Natural killer cell (primary cell): ENCODE measurements at regions of chr4 and their contacts with region 1.

Region 1: DNA sequence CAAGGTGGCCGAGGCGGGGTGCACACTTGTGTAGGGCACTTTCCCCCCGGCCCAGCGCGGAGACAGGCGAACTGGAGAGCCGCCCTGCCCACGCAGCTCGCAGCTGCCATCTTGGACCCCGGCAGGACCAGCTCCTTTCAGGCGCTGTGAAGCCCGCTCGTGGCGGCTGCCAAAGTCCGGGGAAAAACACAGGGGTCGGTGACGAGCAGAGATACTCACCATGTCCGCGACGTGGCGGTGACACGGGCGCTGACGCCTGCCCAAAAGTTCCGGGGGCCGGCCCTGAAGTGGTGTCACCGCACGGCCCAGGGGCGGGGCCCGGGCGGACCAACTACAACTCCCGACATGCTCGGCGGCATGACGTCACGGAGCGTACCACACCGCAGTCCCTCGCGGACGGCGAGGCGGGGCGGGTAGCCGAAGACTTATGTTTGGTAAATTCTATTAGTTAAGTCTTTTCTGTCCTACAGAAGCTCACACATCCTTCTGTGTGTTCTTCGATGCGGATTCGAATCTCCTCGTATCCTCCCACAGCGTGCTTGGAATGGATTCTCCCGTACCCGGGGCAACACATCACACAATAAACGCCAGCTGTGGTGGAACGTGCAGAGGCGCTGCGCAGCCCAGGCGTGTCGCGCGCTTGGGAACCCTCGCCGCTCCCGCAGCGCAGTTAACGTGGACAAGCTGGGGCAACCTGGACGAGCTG is at the start of gene UFSP2:
- DNase-seq: peak; percentile 95 to 96
- ATAC-seq: peak; percentile 86 to 95 (median 86)
- H3K4me3 ChIP-seq: peak within 1 kb of the TSS; percentile 90
- H3K4me3 Mint-ChIP-seq: peak within 1 kb of the TSS; percentile 87
- H3K27ac ChIP-seq: peak within 1 kb of the TSS; percentile 93
- H3K27ac Mint-ChIP-seq: peak within 1 kb of the TSS; percentile 84 to 89
- H3K4me1 ChIP-seq: peaks cover 13% of the 10 kb centered on the region
- H3K4me1 Mint-ChIP-seq: peaks cover 9 to 32% of the 10 kb centered on the region in 2 donors
- H3K27me3 ChIP-seq: no peaks in the 10 kb centered on the region
- H3K27me3 Mint-ChIP-seq: peaks cover 2 to 11% of the 10 kb centered on the region in 2 donors
- CTCF ChIP-seq: no peak
- total RNA-seq, gene UFSP2: 14.0 to 18.8 (median 16.7) TPM

Region 2: GRCh38 chr4:185112104-185112503 is 313.7 kb before region 1 on chr4:
- intact Hi-C with region 1: no loop called
- DNase-seq: no peak
- ATAC-seq: no peak
- H3K4me3 ChIP-seq: no peak overlapping the region
- H3K4me3 Mint-ChIP-seq: no peak overlapping the region
- H3K27ac ChIP-seq: no peak overlapping the region
- H3K27ac Mint-ChIP-seq: no peak overlapping the region
- H3K4me1 ChIP-seq: no peaks in the 10 kb centered on the region
- H3K4me1 Mint-ChIP-seq: no peaks in the 10 kb centered on the region
- H3K27me3 ChIP-seq: peaks cover 3% of the 10 kb centered on the region
- H3K27me3 Mint-ChIP-seq: peaks cover 20% of the 10 kb centered on the region in 2 donors
- CTCF ChIP-seq: no peak

Region 3: GRCh38 chr4:185395956-185396723 is 29.7 kb before region 1 on chr4:
- intact Hi-C with region 1: loop called (anchors 1 kb)
- DNase-seq: peak; percentile 97 to 98
- ATAC-seq: peak; percentile 89 to 98 (median 92)
- H3K4me3 ChIP-seq: peak overlapping the region; percentile 96
- H3K4me3 Mint-ChIP-seq: peak overlapping the region; percentile 96
- H3K27ac ChIP-seq: peak overlapping the region; percentile 99
- H3K27ac Mint-ChIP-seq: peak overlapping the region; percentile 94 to 97
- H3K4me1 ChIP-seq: peaks cover 7% of the 10 kb centered on the region
- H3K4me1 Mint-ChIP-seq: peaks cover 25 to 26% of the 10 kb centered on the region in 2 donors
- H3K27me3 ChIP-seq: no peaks in the 10 kb centered on the region
- H3K27me3 Mint-ChIP-seq: no peaks in the 10 kb centered on the region
- CTCF ChIP-seq: no peak

Region 4: GRCh38 chr4:185559913-185560281 is 134.1 kb after region 1 on chr4:
- intact Hi-C with region 1: no loop called
- DNase-seq: no peak
- ATAC-seq: no peak
- H3K4me3 ChIP-seq: no peak overlapping the region
- H3K4me3 Mint-ChIP-seq: no peak overlapping the region
- H3K27ac ChIP-seq: no peak overlapping the region
- H3K27ac Mint-ChIP-seq: no peak overlapping the region
- H3K4me1 ChIP-seq: no peaks in the 10 kb centered on the region
- H3K4me1 Mint-ChIP-seq: no peaks in the 10 kb centered on the region
- H3K27me3 ChIP-seq: no peaks in the 10 kb centered on the region
- H3K27me3 Mint-ChIP-seq: peaks cover 2 to 12% of the 10 kb centered on the region in 2 donors
- CTCF ChIP-seq: no peak

Region 5: DNA sequence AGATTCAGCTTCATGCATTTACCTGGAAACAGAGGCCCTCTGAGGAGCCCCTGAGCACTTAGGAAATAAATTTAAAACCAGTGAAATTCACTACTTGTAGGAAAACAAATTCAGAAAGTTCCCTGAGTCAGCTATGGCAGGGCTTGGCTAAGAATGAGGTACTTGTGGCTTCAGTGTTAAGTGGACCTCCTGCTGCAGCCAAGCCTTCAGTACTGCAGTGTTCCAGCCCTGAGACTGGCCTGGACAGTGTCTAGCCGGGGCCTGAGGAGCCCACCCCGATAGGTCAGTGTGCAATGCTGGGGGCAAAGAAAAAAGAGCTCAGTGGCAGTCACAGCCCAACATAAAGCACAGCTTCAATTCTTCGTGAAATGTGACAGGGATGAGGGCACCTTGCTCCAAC is 882.1 kb after region 1 on chr4:
- intact Hi-C with region 1: no loop called
- DNase-seq: no peak
- ATAC-seq: no peak
- H3K4me3 ChIP-seq: no peak overlapping the region
- H3K4me3 Mint-ChIP-seq: no peak overlapping the region
- H3K27ac ChIP-seq: no peak overlapping the region
- H3K27ac Mint-ChIP-seq: no peak overlapping the region
- H3K4me1 ChIP-seq: no peaks in the 10 kb centered on the region
- H3K4me1 Mint-ChIP-seq: no peaks in the 10 kb centered on the region
- H3K27me3 ChIP-seq: no peaks in the 10 kb centered on the region
- H3K27me3 Mint-ChIP-seq: peaks cover 15 to 23% of the 10 kb centered on the region in 2 donors
- CTCF ChIP-seq: no peak